Dendritic cell treated with granulocyte-macrophage colony-stimulating factor and Interleukin-4, amounts not matched to agents 40 ng/mL and 50 ng/mL, for 4 days (primary cell): ENCODE measurements at regions of chr14 and their contacts with region 1.

Region 1: DNA sequence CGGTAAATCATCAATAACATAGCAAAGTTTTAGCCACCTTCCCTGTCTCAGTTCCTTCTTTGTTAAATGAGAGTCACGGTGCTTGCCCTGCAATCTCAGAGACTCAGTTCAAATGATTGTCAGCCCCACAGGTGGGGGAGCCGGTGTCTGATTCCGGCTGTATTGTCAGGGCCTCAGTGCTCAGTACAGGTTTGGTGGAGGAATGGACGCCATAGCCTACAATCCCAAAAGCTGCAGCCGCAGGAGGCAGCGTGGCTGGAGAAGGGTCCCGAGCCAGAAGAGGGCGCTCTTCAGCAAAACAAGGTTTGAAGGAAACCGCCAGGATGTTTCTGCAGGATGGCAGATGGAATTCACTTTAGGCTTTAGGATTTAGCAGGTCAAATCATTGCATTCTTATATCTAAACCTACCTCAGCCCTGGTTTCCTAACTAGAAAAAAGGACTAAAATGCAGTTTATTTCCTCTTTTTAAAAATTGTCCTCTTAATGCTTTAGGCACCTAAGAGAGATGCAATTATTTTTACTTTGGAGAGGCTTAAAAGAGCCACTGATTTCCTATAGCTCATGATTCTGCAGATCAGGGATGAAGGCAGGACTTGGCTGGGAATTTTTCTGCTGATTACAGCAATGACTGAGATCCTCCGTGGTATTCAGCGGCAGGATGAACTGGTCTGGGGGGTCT is 29.2 kb downstream of the FOS start:
- H3K4me3 Mint-ChIP-seq: no peak overlapping the region
- H3K27ac Mint-ChIP-seq: no peak overlapping the region
- H3K4me1 Mint-ChIP-seq: peaks cover 21% of the 10 kb centered on the region
- H3K27me3 Mint-ChIP-seq: no peaks in the 10 kb centered on the region

Region 2: DNA sequence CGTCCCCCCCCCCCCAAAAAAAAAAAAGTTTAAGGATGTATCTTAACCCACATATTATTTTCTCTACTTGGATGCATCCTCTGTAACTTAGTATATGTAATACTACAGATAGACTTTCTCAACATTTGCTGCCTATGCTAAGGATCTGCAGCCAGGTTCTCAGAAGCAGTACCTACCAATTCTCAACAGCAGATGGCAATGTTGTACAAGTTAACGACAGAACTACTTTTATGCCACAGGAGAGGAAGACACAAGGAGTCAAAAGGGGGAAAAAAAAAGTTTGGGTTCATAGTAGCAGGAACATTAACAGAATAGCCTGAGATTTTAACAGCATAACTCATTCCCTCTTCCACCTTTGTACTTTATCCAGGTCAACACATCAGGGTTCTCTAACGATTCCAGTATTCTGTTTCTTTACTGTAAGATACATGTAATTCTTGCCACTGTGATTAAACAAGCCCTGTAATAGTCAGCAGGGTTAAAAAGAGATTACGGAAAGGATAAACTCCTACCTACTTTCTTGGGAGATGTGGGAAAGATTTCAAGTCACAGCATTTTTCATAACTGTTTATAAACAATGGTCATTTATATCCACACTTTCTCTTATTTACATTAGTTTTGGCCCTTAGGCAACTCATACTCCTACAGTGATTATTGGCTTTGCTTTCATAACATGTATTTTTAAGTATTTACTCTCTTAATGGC is 175.3 kb before region 1 on chr14:
- intact Hi-C with region 1: loop called (anchors 1 kb)
- H3K4me3 Mint-ChIP-seq: no peak overlapping the region
- H3K27ac Mint-ChIP-seq: no peak overlapping the region
- H3K4me1 Mint-ChIP-seq: peaks cover 25% of the 10 kb centered on the region
- H3K27me3 Mint-ChIP-seq: no peaks in the 10 kb centered on the region

Region 3: DNA sequence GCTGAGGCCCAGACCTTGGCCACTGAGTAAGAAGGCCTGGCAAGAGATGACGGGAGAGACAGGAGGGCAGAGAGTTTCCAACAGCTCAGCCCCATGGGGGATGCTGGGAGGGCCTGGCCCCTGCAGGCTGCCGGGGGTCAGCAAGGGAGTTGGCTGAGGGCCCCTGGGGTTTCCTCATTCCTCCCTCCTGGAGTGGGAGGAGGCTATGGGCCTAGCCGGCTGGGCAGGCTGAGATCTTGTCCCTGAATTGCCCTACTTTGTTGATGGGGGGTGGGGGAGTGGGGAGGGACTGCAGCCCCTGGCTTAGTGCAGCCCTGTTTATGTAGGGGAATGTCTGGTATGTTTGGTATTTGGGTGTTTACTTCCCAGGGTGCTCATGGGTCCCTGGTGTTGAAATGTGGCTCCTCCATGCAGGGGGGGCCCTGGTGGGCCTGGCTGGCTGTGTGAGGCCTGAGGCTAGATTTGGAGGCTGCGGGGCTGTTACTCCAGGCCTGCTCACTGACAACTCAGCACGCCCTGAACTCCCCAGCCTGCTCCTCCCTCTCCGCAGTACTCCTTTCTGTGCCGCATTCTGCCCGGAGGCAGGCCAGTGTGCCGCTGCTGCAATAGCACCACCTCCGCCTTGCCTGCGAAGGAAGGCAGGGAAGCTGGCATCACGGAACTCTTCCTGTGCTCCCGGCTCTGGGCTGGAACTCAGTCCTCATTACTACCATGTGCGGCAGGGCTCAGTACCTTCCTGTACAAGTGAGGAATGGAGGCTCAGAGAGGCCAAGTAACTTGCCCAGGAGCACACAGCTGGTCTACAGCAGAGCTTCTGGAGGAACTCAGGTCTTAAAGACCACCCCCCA is 145.3 kb after region 1 on chr14:
- intact Hi-C with region 1: loop called (anchors 10 kb)
- H3K4me3 Mint-ChIP-seq: no peak overlapping the region
- H3K27ac Mint-ChIP-seq: no peak overlapping the region
- H3K4me1 Mint-ChIP-seq: peaks cover 56% of the 10 kb centered on the region
- H3K27me3 Mint-ChIP-seq: no peaks in the 10 kb centered on the region

Region 4: DNA sequence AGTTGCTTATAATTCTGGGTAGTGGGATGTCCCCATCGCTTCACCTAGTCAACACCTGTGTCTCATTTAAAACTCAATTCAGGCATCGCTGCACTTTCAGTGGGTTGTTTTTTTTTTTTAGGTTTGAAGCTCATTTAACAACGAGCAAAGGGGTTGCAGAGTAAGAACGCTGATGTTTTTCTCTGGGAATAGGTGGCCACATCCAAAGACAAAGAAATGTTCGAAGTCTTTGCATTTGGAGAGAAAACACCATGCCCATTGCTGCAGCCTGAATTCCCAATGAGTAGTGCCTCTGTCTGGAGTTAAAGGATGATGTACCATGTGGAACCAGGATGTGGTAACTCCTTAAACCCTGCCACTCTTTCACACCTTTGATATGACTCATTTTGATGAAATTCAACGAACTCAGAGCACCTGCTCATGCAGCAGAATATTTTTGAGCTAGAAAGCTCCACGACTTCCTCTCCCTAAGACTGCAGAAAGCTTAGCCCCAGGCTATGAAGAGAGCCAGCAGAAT is 179.4 kb after region 1 on chr14:
- intact Hi-C with region 1: loop called (anchors 1 kb)
- H3K4me3 Mint-ChIP-seq: no peak overlapping the region
- H3K27ac Mint-ChIP-seq: no peak overlapping the region
- H3K4me1 Mint-ChIP-seq: peaks cover 5% of the 10 kb centered on the region
- H3K27me3 Mint-ChIP-seq: no peaks in the 10 kb centered on the region

Region 5: DNA sequence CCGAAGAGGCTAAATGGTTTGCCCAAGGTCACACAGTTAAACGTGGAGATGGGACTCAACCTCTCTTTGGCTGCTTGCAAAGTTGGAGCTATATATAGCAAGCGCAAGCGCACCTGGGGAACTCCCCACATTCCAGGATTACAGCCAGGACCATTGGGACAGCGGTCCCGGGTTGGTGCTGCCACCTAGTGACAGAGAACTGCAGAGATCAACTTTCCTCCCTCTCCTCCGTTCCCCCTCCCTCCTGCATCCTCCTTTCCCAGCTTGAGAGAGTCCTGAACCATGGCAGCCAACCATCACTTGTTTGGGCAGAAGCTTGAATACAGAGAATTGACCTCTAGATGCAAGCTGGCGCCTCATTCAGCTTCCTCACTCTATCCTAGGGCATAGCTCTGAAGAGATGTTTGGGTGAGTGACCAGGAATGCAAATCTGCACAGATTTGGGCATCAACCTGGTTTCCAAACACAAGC is 253.2 kb after region 1 on chr14:
- intact Hi-C with region 1: loop called (anchors 5 kb)
- H3K4me3 Mint-ChIP-seq: no peak overlapping the region
- H3K27ac Mint-ChIP-seq: no peak overlapping the region
- H3K4me1 Mint-ChIP-seq: peaks cover 30% of the 10 kb centered on the region
- H3K27me3 Mint-ChIP-seq: no peaks in the 10 kb centered on the region